ENCODE measurements at regions of chr22 and their contacts with region 1.

Region 1: DNA sequence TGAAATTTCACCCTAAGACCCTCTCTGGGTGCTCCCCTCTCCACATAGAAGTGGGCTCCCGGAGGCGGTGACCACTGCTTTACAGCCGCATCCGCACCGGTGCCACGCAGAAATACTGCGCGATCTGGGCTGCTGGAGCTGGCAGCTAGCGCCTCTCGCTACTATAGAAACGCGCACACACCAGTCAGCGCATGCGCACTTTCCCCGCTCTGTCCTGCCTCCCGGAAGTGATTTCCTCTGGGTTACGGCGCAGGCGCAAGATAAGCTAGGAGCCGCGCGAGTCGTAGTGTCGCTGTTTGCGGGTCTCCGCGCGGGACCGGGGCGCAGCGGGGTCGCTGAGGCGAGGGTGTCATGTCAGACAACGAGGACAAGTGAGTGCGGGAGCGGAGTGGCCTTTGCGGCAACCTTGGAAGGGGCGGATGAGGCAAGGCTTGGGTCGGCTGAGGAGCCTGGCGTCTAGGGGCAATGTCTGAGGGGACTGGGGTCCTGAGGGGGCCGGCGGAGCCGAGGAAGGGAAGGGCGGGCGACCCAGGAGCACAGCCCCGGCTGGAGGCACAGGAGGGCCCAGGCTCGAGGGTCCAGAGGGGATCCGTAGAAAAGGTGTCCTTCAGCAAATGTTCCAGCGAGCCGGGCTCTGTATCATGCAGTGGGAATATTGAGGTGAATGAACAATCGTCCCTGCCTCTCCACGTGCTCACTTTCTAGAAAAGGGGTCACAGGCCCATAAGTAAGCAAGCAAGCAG is at the starts of genes C22orf23 and POLR2F:
- DNase-seq: peak in 1 of 2 donors; percentile 98
- H3K4me3 ChIP-seq: peak within 1 kb of the TSS; percentile 95 to 99
- H3K27ac ChIP-seq: peak within 1 kb of the TSS; percentile 66
- H3K4me1 ChIP-seq: peaks cover 33% of the 10 kb centered on the region
- H3K27me3 ChIP-seq: no peaks in the 10 kb centered on the region
- CTCF ChIP-seq: no peak
- POLR2A ChIP-seq: peak in 1 of 2 donors; percentile 41
- total RNA-seq, gene C22orf23: not detected
- total RNA-seq, gene POLR2F: 57.9 TPM

Region 2: GRCh38 chr22:37457093-37457893 is 496.3 kb before region 1 on chr22:
- intact Hi-C with region 1: no loop called
- DNase-seq: no peak
- H3K4me3 ChIP-seq: no peak overlapping the region
- H3K27ac ChIP-seq: no peak overlapping the region
- H3K4me1 ChIP-seq: no peaks in the 10 kb centered on the region
- H3K27me3 ChIP-seq: peaks cover 4% of the 10 kb centered on the region
- CTCF ChIP-seq: peak; percentile 57 to 81 (median 73)
- POLR2A ChIP-seq: no peak

Region 3: GRCh38 chr22:37880668-37881440 is 72.8 kb before region 1 on chr22:
- intact Hi-C with region 1: no loop called
- DNase-seq: no peak
- H3K4me3 ChIP-seq: no peak overlapping the region
- H3K27ac ChIP-seq: no peak overlapping the region
- H3K4me1 ChIP-seq: peaks cover 26% of the 10 kb centered on the region
- H3K27me3 ChIP-seq: no peaks in the 10 kb centered on the region
- CTCF ChIP-seq: no peak
- POLR2A ChIP-seq: no peak

Region 4: GRCh38 chr22:37905534-37906363 is 47.9 kb before region 1 on chr22 and contains the start of gene MICALL1:
- intact Hi-C with region 1: no loop called
- DNase-seq: peak in 1 of 2 donors; percentile 90
- H3K4me3 ChIP-seq: peak within 1 kb of the TSS; percentile 71 to 80
- H3K27ac ChIP-seq: peak within 1 kb of the TSS; percentile 96
- H3K4me1 ChIP-seq: peaks cover 63% of the 10 kb centered on the region
- H3K27me3 ChIP-seq: no peaks in the 10 kb centered on the region
- CTCF ChIP-seq: no peak
- POLR2A ChIP-seq: peak in 1 of 2 donors; percentile 48
- total RNA-seq, gene MICALL1: 112 TPM

Region 5: GRCh38 chr22:38193580-38193979 is 240.0 kb after region 1 on chr22:
- intact Hi-C with region 1: loop called (anchors 10 kb)
- DNase-seq: no peak
- H3K4me3 ChIP-seq: no peak overlapping the region
- H3K27ac ChIP-seq: no peak overlapping the region
- H3K4me1 ChIP-seq: no peaks in the 10 kb centered on the region
- H3K27me3 ChIP-seq: no peaks in the 10 kb centered on the region
- CTCF ChIP-seq: no peak
- POLR2A ChIP-seq: no peak